Motor neuron (in vitro differentiated cells): ENCODE measurements at regions of chr9 and their contacts with region 1.

Region 1: DNA sequence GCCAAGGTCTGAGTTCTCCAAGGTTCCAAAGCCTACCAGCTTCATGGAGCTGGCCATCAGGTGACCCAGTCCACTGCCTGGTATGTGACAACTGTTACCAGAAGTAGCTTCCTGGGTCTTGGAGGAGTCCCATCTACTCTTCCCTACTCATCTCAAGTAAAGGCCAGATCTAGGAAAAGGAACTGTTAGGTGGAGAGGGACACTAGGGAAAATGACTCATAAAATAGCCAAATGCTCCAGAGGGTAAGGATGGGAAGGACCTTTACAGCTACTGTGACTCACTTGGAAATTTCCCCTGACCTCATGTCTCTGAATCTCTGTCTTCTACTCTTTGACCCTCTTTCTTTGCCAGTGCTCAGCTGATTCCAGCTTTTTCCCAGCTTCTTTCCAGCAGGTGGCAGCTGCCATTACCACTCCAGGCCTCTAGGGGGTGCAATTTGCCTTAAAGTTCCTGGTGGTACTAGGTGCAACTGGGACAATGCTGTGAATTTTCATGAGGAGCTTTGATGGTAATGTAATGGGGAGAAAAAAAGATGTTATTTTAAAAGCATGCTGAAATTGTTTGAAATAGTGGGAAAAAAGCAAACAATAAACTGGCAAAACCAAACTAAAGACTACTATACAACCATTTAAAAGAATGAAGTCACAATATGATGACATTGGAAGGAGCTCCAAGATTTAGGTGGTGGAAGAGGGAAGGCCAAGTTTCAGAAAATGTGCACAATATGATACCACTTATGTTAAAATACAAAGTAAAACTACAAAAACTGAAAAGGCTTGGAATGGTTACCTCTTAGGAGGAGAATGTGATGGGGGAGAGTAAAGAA is 27.1 kb upstream of the MYORG start:
- ATAC-seq: peak; percentile 30 to 76 (median 62)
- H3K4me3 ChIP-seq: no peak overlapping the region
- H3K27ac ChIP-seq: no peak overlapping the region
- H3K4me1 ChIP-seq: no peaks in the 10 kb centered on the region

Region 2: GRCh38 chr9:34493972-34494535 is 90.3 kb after region 1 on chr9:
- in situ Hi-C with region 1: loop called in 2 of 9 experiments (anchors 10 kb)
- ATAC-seq: peak in 4 of 8 experiments; percentile 29 to 80 (median 68)
- H3K4me3 ChIP-seq: no peak overlapping the region
- H3K27ac ChIP-seq: no peak overlapping the region
- H3K4me1 ChIP-seq: peaks cover 0 to 4% of the 10 kb centered on the region in 2 donors

Region 3: DNA sequence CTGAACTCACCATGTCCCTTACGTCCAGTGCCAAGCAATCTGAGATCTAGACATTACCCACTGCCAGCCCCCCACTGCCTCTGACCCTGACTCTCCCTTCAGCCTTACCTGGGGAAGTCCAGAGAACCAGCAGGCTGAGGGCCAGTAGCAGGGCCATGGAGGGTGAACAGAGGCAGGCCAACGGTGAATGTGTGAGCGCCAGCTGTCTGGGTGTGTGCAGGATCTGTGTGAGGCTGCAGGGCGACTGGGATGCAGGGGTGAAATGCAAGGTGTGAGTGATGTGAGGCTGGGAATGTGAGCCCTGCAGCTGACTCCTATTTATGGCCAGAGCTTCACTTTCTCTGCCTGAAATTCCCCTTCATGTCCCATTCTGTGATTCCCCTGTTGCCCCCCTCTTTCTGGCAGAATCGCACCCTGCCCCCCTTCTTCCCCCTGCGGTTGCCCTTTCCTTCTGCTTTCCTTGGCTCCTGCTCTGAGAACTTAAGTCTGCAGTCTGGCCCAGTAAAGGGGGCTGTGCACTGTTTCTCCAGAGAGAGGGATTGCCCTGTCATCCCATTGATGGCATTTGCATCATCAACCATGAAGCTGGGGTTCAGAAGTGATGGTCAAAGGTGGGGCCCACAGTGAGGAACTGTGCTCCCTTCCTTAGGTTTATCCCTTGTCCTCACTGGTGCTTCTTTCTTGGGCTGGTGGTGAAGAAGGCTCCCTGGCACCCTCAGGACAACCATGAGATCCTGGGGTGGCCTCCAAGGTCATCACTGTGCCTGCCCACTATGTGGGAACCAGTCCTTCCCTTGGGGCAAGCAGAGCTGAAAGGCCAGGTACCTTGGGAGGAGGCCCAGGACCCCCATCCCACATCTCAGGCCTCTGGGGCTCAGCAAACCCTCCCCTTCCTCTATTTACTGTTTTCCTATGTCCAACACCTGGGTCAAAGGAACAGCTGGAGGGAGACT is 287.5 kb after region 1 on chr9 and contains the start of gene CCL19:
- in situ Hi-C with region 1: no loop called
- ATAC-seq: no peak
- H3K4me3 ChIP-seq: no peak within 1 kb of the TSS
- H3K27ac ChIP-seq: no peak within 1 kb of the TSS
- H3K4me1 ChIP-seq: no peaks in the 10 kb centered on the region
- total RNA-seq, gene CCL19: 0.38 TPM in 1 of 8 experiments, not detected in the others